MCF 10A (cell line): ENCODE measurements at regions of chr5 and their contacts with region 1.

Region 1: DNA sequence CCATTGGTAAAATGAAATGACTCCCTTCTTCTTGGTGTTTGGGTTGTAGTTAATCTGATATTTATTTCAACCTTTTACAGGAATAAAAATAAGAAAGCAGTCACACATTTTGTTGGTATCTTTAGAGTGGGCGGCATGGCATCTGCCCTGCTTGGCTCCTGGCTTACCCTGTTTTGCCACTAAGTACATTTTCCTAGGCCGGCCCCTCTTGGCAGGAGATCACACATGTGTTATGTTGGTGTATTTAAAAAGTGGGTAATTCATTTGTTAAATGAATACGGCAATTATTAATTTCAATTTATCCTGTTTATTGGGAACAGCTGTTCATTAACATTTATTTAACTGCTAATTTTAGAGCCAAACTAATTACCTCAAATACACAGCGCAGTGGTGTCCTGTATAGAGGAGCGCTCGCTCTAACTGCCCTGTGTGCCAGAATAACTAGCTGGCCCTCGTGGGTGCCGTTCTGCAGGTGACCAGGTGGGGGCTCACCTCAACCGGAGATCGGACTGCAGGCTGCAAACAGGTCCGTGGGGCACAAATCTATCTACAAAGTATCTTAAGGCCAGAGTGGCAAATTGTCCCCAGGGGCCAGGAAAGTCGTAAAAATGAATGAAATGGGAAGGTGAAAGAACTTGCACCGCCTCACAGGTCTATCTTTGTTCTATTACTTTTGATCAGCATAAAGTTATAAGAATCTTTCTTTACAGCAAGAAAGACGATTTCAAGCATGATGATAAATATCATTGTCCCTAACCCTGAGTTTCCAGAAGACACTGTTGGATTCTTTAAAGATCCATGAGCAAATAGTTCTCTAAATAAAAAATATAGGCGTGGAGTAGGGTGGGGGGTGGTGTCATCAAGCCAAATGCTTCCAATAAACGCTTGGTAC is 26.2 kb upstream of the GPR151 start:
- DNase-seq: peak; percentile 78
- H3K4me3 Mint-ChIP-seq: no peak overlapping the region
- H3K27ac Mint-ChIP-seq: no peak overlapping the region
- H3K4me1 Mint-ChIP-seq: peaks cover 11% of the 10 kb centered on the region
- H3K27me3 Mint-ChIP-seq: peaks cover 20% of the 10 kb centered on the region
- CTCF ChIP-seq: peak; percentile 99

Region 2: DNA sequence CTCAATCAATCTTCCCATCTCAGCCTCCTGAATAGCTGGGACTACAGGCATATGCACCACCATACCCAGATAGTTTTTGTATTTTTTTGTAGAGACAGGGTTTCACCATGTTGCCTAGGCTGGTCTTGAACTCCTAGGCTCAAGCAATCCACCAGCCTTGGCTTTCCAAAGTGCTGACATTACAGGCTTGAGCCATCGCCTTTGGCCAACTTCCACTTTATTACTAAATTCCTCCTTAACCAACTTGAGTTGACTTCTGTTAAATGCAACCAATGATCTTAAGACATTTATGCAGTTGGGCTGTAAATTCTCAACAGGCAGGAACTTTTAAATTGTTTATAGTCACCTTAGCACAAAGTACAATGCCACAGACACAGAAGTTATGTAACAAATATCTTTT is 362.5 kb before region 1 on chr5:
- CTCF ChIA-PET with region 1: no interaction called
- POLR2A ChIA-PET with region 1: no interaction called
- intact Hi-C with region 1: no loop called
- DNase-seq: no peak
- H3K4me3 Mint-ChIP-seq: peak overlapping the region; percentile 23
- H3K27ac Mint-ChIP-seq: peak overlapping the region; percentile 44
- H3K4me1 Mint-ChIP-seq: no peaks in the 10 kb centered on the region
- H3K27me3 Mint-ChIP-seq: no peaks in the 10 kb centered on the region
- CTCF ChIP-seq: no peak

Region 3: DNA sequence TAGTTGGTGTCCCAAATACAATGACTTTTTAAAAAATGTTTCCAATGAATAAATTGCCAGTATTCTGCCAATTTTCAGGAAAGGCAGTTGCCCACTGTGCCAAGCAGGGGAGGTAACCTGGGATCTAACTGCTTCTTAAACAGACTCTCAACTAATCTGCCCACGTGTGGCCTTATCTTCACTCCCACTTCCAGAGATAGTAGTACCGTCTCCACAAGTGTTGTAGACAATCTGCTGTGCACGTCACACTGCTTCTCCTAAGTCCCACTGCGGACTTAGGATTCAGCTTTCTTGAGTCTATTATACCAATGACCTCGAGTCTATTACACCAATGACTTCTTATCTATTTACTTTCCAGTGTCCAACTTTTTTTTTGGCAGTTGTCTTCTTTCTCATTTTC is 182.4 kb before region 1 on chr5:
- CTCF ChIA-PET with region 1: no interaction called
- POLR2A ChIA-PET with region 1: no interaction called
- intact Hi-C with region 1: no loop called
- DNase-seq: no peak
- H3K4me3 Mint-ChIP-seq: no peak overlapping the region
- H3K27ac Mint-ChIP-seq: no peak overlapping the region
- H3K4me1 Mint-ChIP-seq: no peaks in the 10 kb centered on the region
- H3K27me3 Mint-ChIP-seq: peaks cover 21% of the 10 kb centered on the region
- CTCF ChIP-seq: no peak

Region 4: DNA sequence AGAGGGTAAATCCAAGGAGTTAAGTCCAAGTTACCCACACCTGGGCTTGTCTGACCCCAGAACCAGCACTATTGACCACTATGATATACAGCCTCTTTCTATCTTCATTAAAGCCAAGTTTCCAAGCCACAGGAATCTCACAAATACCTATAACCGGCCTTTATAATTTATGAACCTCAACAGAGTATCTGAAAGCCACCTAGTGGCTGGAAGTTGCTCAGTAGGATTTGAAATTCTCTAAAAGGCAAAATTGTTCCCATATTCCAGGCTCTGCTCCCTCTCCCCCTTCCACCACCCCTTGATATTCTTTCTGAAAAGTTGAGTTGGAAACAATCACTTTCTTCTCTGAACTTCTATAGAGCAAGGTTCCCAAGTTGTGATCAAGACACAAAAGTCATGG is 80.2 kb after region 1 on chr5:
- CTCF ChIA-PET with region 1: interaction called, 5 read pairs
- POLR2A ChIA-PET with region 1: no interaction called
- intact Hi-C with region 1: loop called (anchors 5 kb)
- DNase-seq: no peak
- H3K4me3 Mint-ChIP-seq: no peak overlapping the region
- H3K27ac Mint-ChIP-seq: no peak overlapping the region
- H3K4me1 Mint-ChIP-seq: no peaks in the 10 kb centered on the region
- H3K27me3 Mint-ChIP-seq: peaks cover 22% of the 10 kb centered on the region
- CTCF ChIP-seq: peak; percentile 44

Region 5: DNA sequence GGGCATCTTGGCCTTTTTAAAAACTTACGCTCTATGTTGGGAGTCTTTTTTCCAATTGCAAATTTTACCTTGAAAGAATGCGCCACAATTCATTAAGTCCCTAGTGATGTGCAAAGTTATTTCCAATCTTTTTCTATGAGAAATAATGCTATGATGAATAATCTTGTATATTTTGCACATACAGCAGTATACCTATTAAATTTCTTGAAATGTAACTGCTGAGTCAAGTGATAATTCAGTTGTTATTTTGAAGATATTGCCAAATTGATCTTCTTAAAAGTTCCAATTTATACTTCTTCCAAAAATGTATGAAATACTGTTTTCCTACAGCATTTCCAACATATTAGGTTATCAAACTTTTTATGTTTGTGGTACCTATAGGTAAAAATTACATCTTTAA is 429.2 kb after region 1 on chr5:
- CTCF ChIA-PET with region 1: interaction called, 485 read pairs
- POLR2A ChIA-PET with region 1: interaction called, 4 read pairs
- intact Hi-C with region 1: loop called (anchors 1 kb)
- DNase-seq: no peak
- H3K4me3 Mint-ChIP-seq: no peak overlapping the region
- H3K27ac Mint-ChIP-seq: no peak overlapping the region
- H3K4me1 Mint-ChIP-seq: no peaks in the 10 kb centered on the region
- H3K27me3 Mint-ChIP-seq: peaks cover 40% of the 10 kb centered on the region
- CTCF ChIP-seq: no peak

Region 6: DNA sequence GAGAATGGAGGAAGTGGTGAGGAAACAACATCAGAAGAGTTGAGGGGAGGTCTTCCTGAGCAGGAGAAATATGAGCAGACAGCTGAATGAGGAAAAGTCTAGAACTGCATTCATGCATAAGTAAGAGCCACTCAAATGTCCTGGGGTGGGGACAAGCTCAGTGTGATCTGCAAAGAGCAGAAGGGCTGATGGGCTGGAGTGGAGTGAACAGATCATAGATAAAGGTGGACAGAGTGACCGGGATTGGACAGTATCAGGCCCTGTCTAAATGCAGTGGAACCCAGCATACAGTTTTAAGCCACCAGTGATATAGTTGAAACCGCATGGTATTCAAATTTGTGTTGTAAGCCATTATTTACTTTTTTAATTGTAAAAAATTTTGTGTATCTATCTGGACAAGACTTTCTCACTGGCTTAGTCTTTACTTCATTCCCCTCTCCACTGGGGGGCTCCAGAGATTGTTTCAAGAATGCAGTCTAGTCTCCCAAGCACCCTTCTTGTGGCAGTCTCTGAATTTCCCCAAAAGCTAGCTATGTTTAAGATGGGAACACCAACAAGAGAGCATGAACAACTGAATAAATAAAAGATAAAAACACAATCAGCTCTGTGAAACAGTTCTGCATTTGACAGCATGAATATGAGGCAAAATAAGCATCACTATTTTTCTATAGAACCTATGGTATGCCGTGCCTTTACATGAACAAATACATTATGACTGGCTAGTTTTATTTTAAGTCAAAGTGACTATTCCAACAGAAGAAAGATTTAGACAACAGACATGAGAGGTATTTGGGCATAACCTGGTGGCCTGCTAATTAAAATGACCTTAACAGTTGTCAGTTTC is 682.0 kb after region 1 on chr5:
- CTCF ChIA-PET with region 1: no interaction called
- POLR2A ChIA-PET with region 1: no interaction called
- intact Hi-C with region 1: no loop called
- DNase-seq: peak; percentile 78
- H3K4me3 Mint-ChIP-seq: no peak overlapping the region
- H3K27ac Mint-ChIP-seq: no peak overlapping the region
- H3K4me1 Mint-ChIP-seq: peaks cover 7% of the 10 kb centered on the region
- H3K27me3 Mint-ChIP-seq: peaks cover 44% of the 10 kb centered on the region
- CTCF ChIP-seq: peak; percentile 87

Region 7: GRCh38 chr5:147234825-147235635 is 692.8 kb after region 1 on chr5 and contains the start of gene STK32A:
- CTCF ChIA-PET with region 1: interaction called, 10 read pairs
- POLR2A ChIA-PET with region 1: no interaction called
- intact Hi-C with region 1: no loop called
- DNase-seq: peak; percentile 67
- H3K4me3 Mint-ChIP-seq: peak within 1 kb of the TSS; percentile 68
- H3K27ac Mint-ChIP-seq: no peak within 1 kb of the TSS
- H3K4me1 Mint-ChIP-seq: peaks cover 15% of the 10 kb centered on the region
- H3K27me3 Mint-ChIP-seq: no peaks in the 10 kb centered on the region
- CTCF ChIP-seq: no peak
- total RNA-seq, gene STK32A: 3.3 and 11.4 TPM in 2 replicates